H1 (cell line): ENCODE measurements at regions of chr10 and their contacts with region 1.

Region 1: GRCh38 chr10:12902135-12902572 is 99.4 kb downstream of the CCDC3 start:
- DNase-seq: peak; percentile 25 to 84
- H3K4me3 ChIP-seq: no peak overlapping the region
- H3K27ac ChIP-seq: no peak overlapping the region
- H3K4me1 ChIP-seq: peaks cover 0 to 8% (median 2%) of the 10 kb centered on the region in 4 experiments; a peak in 4 of 7 replicates
- H3K27me3 ChIP-seq: no peaks in the 10 kb centered on the region
- CTCF ChIP-seq: peak; percentile 40 to 83 (median 71)
- EP300 ChIP-seq: no peak
- POLR2A ChIP-seq: no peak
- RAD21 ChIP-seq: peak; percentile 80 to 88

Region 2: DNA sequence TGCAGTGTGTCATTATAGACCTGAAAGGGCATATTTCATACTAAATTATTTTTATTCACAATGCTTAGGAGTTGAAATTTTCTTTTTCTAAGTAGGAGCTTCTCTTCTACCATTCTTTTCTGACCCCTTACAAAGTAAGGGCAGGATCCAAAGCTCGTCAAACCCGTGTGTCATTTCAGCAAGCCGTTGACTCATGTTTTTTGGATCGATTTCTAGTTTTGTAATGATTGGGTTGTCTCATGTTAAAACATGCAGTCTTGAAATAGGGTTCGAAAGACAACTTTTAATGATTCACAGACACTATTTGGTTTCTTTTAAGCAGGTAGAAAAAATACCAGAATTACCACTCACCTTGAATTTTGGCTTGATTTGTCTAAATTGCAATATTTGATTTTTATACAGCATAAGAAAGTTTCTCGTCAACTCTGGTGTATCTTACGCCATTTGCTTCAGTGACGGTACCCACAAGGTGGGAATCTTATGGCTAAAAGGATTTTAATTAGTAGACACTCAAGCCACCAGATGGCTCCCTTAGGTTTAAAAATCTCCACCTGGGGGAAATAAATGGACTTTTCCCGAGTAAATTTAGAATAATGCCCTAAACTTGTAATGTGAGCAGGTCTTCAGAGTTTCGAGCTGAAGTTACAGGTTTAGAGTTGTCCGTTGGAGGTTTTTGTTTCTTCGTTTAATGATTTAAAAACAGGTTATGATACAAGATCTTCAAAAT is 184.0 kb before region 1 on chr10:
- CTCF ChIA-PET with region 1: interaction called, 16 read pairs
- POLR2A ChIA-PET with region 1: no interaction called
- DNase-seq: no peak
- H3K4me3 ChIP-seq: no peak overlapping the region
- H3K27ac ChIP-seq: no peak overlapping the region
- H3K4me1 ChIP-seq: peaks cover 0 to 3% (median 0%) of the 10 kb centered on the region in 4 experiments; a peak in 1 of 7 replicates
- H3K27me3 ChIP-seq: no peaks in the 10 kb centered on the region
- CTCF ChIP-seq: peak in 2 of 3 experiments; percentile 12 to 54; a peak in 3 of 4 replicates
- EP300 ChIP-seq: no peak
- POLR2A ChIP-seq: no peak
- RAD21 ChIP-seq: peak; percentile 58 to 65

Region 3: DNA sequence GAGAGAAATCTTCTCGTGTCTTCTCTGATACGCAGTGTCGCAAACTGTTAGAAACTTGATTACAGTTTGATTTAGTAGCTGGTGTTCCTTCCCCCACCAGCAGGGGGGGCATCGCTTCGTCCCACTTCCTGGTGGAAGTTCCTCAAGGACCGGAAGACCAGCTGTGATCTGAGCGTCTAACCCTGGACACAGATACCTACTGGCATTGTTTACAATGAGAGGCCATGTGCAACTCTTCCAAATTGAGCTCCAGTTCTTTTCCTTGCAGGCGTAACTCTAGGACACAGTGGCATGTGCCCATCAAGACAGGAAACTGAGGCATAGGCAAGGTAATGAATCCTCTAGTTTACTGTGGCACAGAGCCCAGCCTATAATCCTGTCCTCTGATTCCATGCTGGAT is 119.6 kb before region 1 on chr10:
- CTCF ChIA-PET with region 1: interaction called, 20 read pairs
- POLR2A ChIA-PET with region 1: no interaction called
- DNase-seq: peak in 1 of 2 experiments; percentile 86
- H3K4me3 ChIP-seq: no peak overlapping the region
- H3K27ac ChIP-seq: no peak overlapping the region
- H3K4me1 ChIP-seq: no peaks in the 10 kb centered on the region
- H3K27me3 ChIP-seq: no peaks in the 10 kb centered on the region
- CTCF ChIP-seq: peak; percentile 70 to 90 (median 82)
- EP300 ChIP-seq: no peak
- POLR2A ChIP-seq: no peak
- RAD21 ChIP-seq: peak; percentile 58 to 67

Region 4: DNA sequence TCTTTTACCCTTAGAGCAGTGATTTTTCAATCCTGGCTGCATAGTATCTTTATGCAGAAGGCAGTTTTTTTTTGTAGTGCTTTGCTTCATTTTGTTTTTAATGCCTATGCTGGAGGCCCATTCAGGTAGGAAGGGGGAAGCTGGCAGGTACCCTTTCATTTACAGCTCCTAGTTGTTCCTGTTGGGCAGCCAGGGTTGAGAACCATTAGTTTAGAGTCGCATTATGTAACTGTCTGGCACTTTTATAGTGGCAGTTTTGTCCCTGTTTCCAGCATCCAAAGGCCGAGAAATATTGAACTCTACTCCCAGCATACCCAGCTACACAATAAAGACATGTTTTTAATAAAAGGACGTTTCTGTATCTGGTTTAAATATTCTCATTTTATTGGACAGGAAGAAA is 11.2 kb before region 1 on chr10:
- CTCF ChIA-PET with region 1: interaction called, 14 read pairs
- POLR2A ChIA-PET with region 1: interaction called, 3 read pairs
- DNase-seq: no peak
- H3K4me3 ChIP-seq: no peak overlapping the region
- H3K27ac ChIP-seq: no peak overlapping the region
- H3K4me1 ChIP-seq: no peaks in the 10 kb centered on the region
- H3K27me3 ChIP-seq: no peaks in the 10 kb centered on the region
- CTCF ChIP-seq: no peak
- EP300 ChIP-seq: no peak
- POLR2A ChIP-seq: no peak
- RAD21 ChIP-seq: no peak

Region 5: DNA sequence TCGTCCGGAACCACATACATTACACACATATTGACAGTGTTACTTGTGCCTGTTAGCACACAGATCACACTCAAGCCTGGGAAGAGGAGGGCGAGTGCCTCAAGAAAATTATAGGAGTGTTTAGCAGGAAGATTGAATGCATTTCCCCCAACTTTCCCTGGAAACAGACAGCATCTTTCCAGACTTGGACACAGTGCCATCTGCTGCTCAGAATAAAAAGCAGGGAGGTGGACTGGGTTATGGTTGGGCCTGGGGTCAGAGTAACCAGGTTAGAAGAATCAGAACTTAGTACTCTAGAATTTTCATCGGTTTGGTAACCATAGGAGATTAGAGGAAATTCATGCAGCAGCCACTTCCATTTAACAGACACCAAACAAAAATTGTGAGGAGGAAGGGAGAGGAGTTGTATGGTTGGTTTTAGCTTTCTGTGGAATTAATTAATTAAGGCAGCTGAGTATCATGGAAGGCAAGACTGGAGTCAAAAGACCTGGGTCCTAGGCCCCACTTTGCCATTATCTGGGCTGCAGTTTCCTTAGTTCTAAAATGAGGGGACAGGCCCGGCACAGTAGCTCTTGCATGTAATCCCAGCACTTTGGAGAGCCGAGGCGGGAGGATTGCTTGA is 154.4 kb after region 1 on chr10:
- CTCF ChIA-PET with region 1: interaction called, 20 read pairs
- POLR2A ChIA-PET with region 1: no interaction called
- DNase-seq: no peak
- H3K4me3 ChIP-seq: no peak overlapping the region
- H3K27ac ChIP-seq: no peak overlapping the region
- H3K4me1 ChIP-seq: peaks cover 0 to 1% (median 0%) of the 10 kb centered on the region in 4 experiments; a peak in 3 of 7 replicates
- H3K27me3 ChIP-seq: no peaks in the 10 kb centered on the region; a peak in 2 of 7 replicates
- CTCF ChIP-seq: peak; percentile 19 to 60 (median 54)
- EP300 ChIP-seq: no peak
- POLR2A ChIP-seq: no peak
- RAD21 ChIP-seq: peak; percentile 69 to 77

Region 6: DNA sequence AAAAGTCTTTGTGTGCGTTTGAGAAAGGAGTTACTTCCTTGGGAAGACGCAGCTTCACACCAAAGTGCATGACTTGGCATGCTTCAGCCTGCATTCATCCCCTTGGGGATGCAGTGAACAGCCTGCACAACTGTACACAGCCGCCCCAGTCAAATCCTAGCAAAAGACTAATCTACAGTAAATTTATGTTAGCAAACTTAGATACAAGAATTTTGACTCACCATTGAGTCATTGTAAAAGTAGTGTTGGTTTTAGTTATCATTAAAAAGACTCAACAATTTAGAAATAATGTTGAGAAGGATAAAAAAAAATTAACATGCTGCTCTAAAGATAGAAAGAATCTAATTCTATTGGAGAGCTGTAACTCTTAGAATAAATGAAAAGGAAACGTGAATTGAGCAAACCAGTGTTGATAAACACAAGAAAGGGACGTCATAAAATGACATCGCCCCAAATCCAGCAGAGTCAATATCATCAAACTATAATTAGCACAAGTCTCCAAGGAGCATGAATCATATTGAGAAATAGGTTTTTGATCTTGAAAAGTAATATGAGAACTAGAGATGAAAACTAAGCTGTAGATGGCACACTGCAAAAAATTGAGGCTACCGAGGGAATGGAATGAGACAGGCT is 185.9 kb after region 1 on chr10:
- CTCF ChIA-PET with region 1: interaction called, 13 read pairs
- POLR2A ChIA-PET with region 1: no interaction called
- DNase-seq: no peak
- H3K4me3 ChIP-seq: no peak overlapping the region
- H3K27ac ChIP-seq: no peak overlapping the region
- H3K4me1 ChIP-seq: no peaks in the 10 kb centered on the region
- H3K27me3 ChIP-seq: no peaks in the 10 kb centered on the region
- CTCF ChIP-seq: no peak
- EP300 ChIP-seq: no peak
- POLR2A ChIP-seq: no peak
- RAD21 ChIP-seq: no peak

Region 7: DNA sequence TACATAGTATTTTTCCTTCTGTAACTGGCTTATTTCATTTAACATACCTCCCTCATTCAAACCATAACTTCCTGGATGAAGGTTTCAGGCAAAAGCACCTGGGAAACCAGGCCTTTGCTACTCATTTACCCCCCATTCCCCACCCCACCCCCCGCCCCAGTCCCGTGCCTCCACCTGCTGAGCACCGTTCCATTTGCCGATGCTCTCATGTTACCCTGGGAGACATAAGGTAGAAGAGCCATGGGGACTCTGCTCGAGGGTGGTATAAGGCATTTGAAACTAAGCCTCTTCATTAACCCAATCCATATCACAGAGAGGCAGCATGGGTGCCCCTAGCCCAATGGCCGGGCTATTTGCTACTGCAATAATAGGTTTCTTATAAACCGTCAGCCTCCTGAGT is 237.0 kb after region 1 on chr10:
- CTCF ChIA-PET with region 1: no interaction called
- POLR2A ChIA-PET with region 1: no interaction called
- DNase-seq: no peak
- H3K4me3 ChIP-seq: no peak overlapping the region
- H3K27ac ChIP-seq: no peak overlapping the region
- H3K4me1 ChIP-seq: peaks cover 0 to 8% (median 2%) of the 10 kb centered on the region in 4 experiments; a peak in 3 of 7 replicates
- H3K27me3 ChIP-seq: no peaks in the 10 kb centered on the region
- CTCF ChIP-seq: no peak
- EP300 ChIP-seq: no peak
- POLR2A ChIP-seq: no peak
- RAD21 ChIP-seq: no peak

Region 8: DNA sequence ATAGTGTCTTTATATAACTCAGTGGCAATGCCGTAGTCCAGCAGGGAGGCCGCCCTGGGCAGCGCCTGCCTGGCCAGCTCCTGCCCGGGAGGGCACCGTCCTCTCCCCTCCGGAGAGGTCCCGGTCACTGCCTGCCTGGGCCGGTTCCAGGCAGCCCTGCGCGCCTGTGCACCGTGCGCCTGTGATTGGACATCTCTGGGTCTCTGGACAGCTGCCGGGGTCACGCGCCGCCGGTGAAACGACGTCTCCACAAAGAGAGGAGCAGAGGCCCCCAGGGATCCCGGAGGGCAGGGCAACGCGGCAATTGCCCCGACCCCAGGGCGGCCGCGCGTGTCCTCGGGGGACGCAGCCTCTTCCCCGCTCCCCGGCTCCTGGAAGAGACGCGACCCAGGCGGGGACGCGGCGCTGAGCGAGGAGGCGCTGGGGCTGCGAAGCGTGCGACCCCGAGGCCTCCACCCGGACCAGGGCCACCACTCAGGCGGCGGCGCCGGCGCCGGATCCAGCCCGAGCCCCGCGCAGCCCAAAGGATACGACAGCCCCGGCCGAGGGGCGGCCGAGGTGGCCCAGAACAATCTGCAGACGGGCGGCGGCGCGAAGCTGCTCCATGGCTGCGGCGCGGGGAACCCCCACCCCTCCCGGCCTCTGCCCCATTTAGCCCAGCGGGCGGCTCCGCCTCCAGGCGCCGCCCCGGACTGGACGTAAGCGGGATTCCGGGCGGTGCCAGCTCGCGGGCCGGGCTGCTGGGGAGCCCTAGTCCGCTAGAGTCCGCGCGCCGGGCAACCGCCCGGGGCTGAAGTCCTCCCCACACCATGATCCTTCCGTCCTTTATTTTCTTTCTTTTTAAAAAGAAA is 397.5 kb after region 1 on chr10 and contains the start of gene PHYH:
- CTCF ChIA-PET with region 1: no interaction called
- POLR2A ChIA-PET with region 1: no interaction called
- DNase-seq: peak; percentile 50 to 87
- H3K4me3 ChIP-seq: peak within 1 kb of the TSS; percentile 39 to 58 (median 54)
- H3K27ac ChIP-seq: peak within 1 kb of the TSS; percentile 71; the same call in 1 of the 2 replicates
- H3K4me1 ChIP-seq: peaks cover 0 to 6% (median 3%) of the 10 kb centered on the region in 4 experiments; a peak in 5 of 7 replicates
- H3K27me3 ChIP-seq: no peaks in the 10 kb centered on the region; a peak in 2 of 7 replicates
- CTCF ChIP-seq: no peak
- EP300 ChIP-seq: peak in 1 of 2 experiments; percentile 54; a peak in 1 of 3 replicates
- POLR2A ChIP-seq: peak; percentile 76 to 80
- RAD21 ChIP-seq: peak in 1 of 2 experiments; percentile 1; a peak in 1 of 4 replicates
- total RNA-seq, gene PHYH: 22.7 and 23.2 TPM in 2 replicates